ENCODE measurements at regions of chr2 and their contacts with region 1.

Region 1: GRCh38 chr2:17851731-17852585 is 26.5 kb upstream of the KCNS3 start:
- H3K4me3 ChIP-seq: no peak overlapping the region
- H3K27ac ChIP-seq: no peak overlapping the region
- H3K4me1 ChIP-seq: no peaks in the 10 kb centered on the region
- CTCF ChIP-seq: peak; percentile 71; the same call in 1 of the 2 replicates

Region 2: GRCh38 chr2:17740203-17740602 is 111.8 kb before region 1 on chr2:
- CTCF ChIA-PET with region 1: no interaction called
- POLR2A ChIA-PET with region 1: no interaction called
- H3K4me3 ChIP-seq: no peak overlapping the region
- H3K27ac ChIP-seq: no peak overlapping the region
- H3K4me1 ChIP-seq: no peaks in the 10 kb centered on the region
- CTCF ChIP-seq: no peak

Region 3: DNA sequence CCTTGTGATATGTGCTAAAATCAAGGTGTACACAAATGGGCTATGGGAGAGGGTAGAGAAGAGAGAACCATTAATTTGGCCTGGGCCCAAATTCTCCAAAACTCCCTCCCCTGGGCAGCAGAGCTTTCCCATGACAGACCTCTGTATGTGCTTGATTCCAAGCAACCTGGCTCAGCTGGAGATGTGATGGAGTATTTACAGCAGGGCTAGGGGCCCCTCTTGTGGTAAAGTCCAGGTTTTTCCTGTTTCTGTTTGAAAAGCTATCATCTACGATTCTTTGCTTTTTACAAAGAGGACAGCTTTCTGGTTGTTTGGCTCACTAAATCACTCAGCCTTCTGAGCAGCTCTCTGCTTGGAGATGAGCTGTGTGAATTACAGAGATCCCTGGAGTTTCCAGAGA is 66.8 kb after region 1 on chr2:
- CTCF ChIA-PET with region 1: interaction called, 19 read pairs
- POLR2A ChIA-PET with region 1: no interaction called
- H3K4me3 ChIP-seq: no peak overlapping the region
- H3K27ac ChIP-seq: no peak overlapping the region
- H3K4me1 ChIP-seq: peaks cover 6% of the 10 kb centered on the region; the same call in 1 of the 2 replicates
- CTCF ChIP-seq: peak; percentile 70

Region 4: GRCh38 chr2:18077704-18078103 is 225.7 kb after region 1 on chr2:
- CTCF ChIA-PET with region 1: no interaction called
- POLR2A ChIA-PET with region 1: no interaction called
- H3K4me3 ChIP-seq: no peak overlapping the region
- H3K27ac ChIP-seq: no peak overlapping the region
- H3K4me1 ChIP-seq: no peaks in the 10 kb centered on the region
- CTCF ChIP-seq: no peak

Region 5: GRCh38 chr2:18378020-18378653 is 526.2 kb after region 1 on chr2:
- CTCF ChIA-PET with region 1: interaction called, 26 read pairs
- POLR2A ChIA-PET with region 1: no interaction called
- H3K4me3 ChIP-seq: no peak overlapping the region
- H3K27ac ChIP-seq: no peak overlapping the region
- H3K4me1 ChIP-seq: 0 out of 2 replicates have a peak, but pooled peaks cover under 1% of the 10 kb centered on the region
- CTCF ChIP-seq: peak; percentile 53; the same call in 1 of the 2 replicates